ENCODE measurements at regions of chr9 and their contacts with region 1.

Region 1: GRCh38 chr9:113669522-113670115 is 206.1 kb downstream of the RGS3 start:
- DNase-seq: no peak
- H3K4me3 ChIP-seq: no peak overlapping the region
- H3K27ac ChIP-seq: no peak overlapping the region
- H3K4me1 ChIP-seq: no peaks in the 10 kb centered on the region
- H3K27me3 ChIP-seq: no peaks in the 10 kb centered on the region
- CTCF ChIP-seq: no peak

Region 2: DNA sequence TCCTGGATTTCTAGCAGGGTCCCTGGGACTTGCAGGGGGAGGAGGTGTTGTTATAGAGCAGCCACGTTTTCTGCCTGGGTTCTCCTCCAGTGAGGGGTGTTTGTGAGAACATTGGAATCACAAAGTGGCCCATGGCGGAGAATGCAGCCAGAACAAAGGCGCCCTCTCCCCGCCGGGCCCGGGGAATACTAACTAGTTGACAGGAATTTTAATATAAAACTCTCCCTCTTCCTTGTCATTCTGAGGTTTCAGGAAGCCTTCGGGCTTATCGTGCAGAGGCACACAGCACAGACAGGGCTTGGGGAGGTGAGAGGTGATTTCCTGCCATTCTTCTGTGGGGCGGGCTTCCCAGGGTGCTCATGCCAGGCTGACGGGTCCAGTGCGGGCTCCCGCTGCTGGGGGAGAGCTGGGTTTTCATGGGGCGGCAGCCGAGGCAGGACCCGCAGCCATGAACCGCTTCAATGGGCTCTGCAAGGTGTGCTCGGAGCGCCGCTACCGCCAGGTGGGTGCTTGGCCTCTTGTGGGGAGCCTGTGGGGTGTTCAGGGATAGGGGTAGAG is 168.4 kb before region 1 on chr9:
- CTCF ChIA-PET with region 1: no interaction called
- dilution Hi-C with region 1: loop called (anchors 5 kb)
- in situ Hi-C with region 1: no loop called
- intact Hi-C with region 1: no loop called
- DNase-seq: no peak
- H3K4me3 ChIP-seq: no peak overlapping the region
- H3K27ac ChIP-seq: no peak overlapping the region
- H3K4me1 ChIP-seq: no peaks in the 10 kb centered on the region
- H3K27me3 ChIP-seq: no peaks in the 10 kb centered on the region
- CTCF ChIP-seq: no peak

Measured in mammary epithelial cell (primary cell).